ENCODE measurements at regions of chr5 and their contacts with region 1.

Region 1: GRCh38 chr5:169701910-169702451 is 64.9 kb downstream of the DOCK2 start:
- DNase-seq: peak in 2 of 4 experiments; percentile 25 to 40
- ATAC-seq: peak; percentile 76
- H3K4me3 ChIP-seq: no peak overlapping the region
- H3K27ac ChIP-seq: no peak overlapping the region
- H3K4me1 ChIP-seq: peaks cover 0 to 10% of the 10 kb centered on the region in 2 experiments; a peak in 2 of 5 replicates
- H3K27me3 ChIP-seq: no peaks in the 10 kb centered on the region
- CTCF ChIP-seq: peak; percentile 47 to 74 (median 57); a peak in 5 of 6 replicates
- EP300 ChIP-seq: no peak
- POLR2A ChIP-seq: no peak
- RAD21 ChIP-seq: peak; percentile 55 to 84

Region 2: DNA sequence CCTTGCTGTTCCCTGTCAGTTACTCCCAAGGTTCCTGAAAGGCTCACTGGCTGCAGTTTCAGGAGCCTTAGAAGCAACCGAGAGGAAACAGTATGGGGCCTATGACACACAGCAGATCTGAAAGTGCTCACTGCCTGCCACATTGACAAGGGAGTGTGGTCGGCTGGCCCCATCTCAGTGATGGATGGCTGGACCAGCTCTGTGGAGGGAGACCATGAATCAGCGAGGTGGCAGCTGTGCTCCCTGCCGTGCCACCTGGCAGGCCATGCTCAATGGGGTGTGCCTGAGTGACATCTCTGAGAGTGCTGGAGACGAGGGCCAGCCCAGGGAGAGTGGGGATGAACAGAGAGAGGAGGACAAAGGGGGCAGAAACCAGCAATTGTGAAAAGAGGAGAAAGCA is 15.8 kb before region 1 on chr5:
- CTCF ChIA-PET with region 1: no interaction called
- POLR2A ChIA-PET with region 1: no interaction called
- in situ Hi-C with region 1: no loop called
- intact Hi-C with region 1: no loop called
- DNase-seq: no peak
- ATAC-seq: no peak
- H3K4me3 ChIP-seq: no peak overlapping the region
- H3K27ac ChIP-seq: no peak overlapping the region
- H3K4me1 ChIP-seq: no peaks in the 10 kb centered on the region
- H3K27me3 ChIP-seq: 0 out of 5 replicates have a peak, but pooled peaks cover 0 to 4% of the 10 kb centered on the region in 2 experiments
- CTCF ChIP-seq: no peak
- EP300 ChIP-seq: no peak
- POLR2A ChIP-seq: no peak
- RAD21 ChIP-seq: no peak

Region 3: GRCh38 chr5:169745441-169746146 is 43.6 kb after region 1 on chr5:
- CTCF ChIA-PET with region 1: no interaction called
- POLR2A ChIA-PET with region 1: no interaction called
- in situ Hi-C with region 1: no loop called
- intact Hi-C with region 1: loop called (anchors 1 kb)
- DNase-seq: peak; percentile 24 to 50 (median 38)
- ATAC-seq: peak; percentile 57
- H3K4me3 ChIP-seq: no peak overlapping the region
- H3K27ac ChIP-seq: peak overlapping the region; percentile 87
- H3K4me1 ChIP-seq: peaks cover 14 to 38% of the 10 kb centered on the region in 2 experiments; a peak in 4 of 5 replicates
- H3K27me3 ChIP-seq: no peaks in the 10 kb centered on the region
- CTCF ChIP-seq: no peak
- EP300 ChIP-seq: no peak
- POLR2A ChIP-seq: no peak
- RAD21 ChIP-seq: no peak

Region 4: DNA sequence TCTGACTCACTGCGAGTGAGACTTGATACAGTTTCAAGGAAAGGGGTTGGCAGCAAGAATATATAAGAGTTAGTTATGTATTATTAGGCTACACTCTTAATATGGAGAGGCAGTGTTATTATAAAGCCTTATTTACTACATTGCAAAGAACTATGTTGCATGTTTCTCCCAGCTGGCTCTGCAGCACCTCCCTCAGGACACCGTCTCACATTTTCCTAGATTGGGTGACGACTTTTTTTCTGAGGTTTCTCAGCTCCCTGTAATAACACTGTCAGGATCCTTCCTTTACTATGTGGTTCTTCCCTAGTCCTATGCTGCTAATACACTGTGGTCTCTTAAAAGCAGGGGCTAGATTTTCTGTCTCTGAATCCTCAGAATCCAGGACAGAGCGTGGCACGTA is 124.6 kb after region 1 on chr5:
- CTCF ChIA-PET with region 1: no interaction called
- POLR2A ChIA-PET with region 1: no interaction called
- in situ Hi-C with region 1: no loop called
- intact Hi-C with region 1: loop called (anchors 1 kb)
- DNase-seq: peak; percentile 12 to 25 (median 18)
- ATAC-seq: peak; percentile 63; the same call in 1 of the 3 replicates
- H3K4me3 ChIP-seq: no peak overlapping the region
- H3K27ac ChIP-seq: no peak overlapping the region
- H3K4me1 ChIP-seq: no peaks in the 10 kb centered on the region
- H3K27me3 ChIP-seq: no peaks in the 10 kb centered on the region; a peak in 1 of 5 replicates
- CTCF ChIP-seq: peak; percentile 36 to 54 (median 39); a peak in 4 of 6 replicates
- EP300 ChIP-seq: no peak
- POLR2A ChIP-seq: no peak
- RAD21 ChIP-seq: peak in 1 of 2 experiments; percentile 48; a peak in 3 of 4 replicates

Region 5: DNA sequence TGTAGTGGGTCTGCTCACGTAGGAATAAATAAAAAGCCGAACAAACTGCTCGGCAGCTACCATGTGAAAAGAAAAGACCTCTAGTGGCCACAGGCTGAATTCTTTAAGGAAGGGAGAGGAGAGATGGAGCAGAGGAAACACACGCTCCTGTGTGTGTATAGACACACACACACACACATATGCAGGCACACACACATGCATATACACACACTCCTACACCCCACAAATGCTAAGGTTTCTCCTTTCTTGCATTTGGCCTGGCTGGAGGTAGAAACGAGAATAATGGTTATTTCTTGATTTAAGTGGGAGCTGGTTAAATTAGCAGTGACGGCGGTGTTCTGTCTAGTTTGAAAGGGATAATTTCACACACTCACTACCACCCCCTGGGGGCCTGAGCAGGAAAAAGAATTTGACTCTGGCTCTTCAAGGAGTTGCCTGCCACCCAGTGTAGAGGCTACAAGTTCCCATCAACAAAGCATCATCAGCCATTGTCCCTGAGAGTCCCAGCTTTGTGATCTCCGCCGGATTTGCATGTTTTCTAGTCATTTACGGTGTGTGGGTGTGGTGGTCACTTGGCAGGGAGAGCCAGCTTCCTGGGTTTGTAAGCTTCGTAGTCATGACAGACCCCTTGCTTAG is 278.6 kb after region 1 on chr5 and contains the start of gene INSYN2B:
- CTCF ChIA-PET with region 1: interaction called, 5 read pairs
- POLR2A ChIA-PET with region 1: interaction called, 6 read pairs
- in situ Hi-C with region 1: loop called (anchors 10 kb)
- intact Hi-C with region 1: loop called (anchors 1 kb)
- DNase-seq: peak; percentile 65 to 71 (median 68)
- ATAC-seq: peak; percentile 97
- H3K4me3 ChIP-seq: no peak within 1 kb of the TSS
- H3K27ac ChIP-seq: no peak within 1 kb of the TSS
- H3K4me1 ChIP-seq: no peaks in the 10 kb centered on the region; a peak in 1 of 5 replicates
- H3K27me3 ChIP-seq: no peaks in the 10 kb centered on the region; a peak in 1 of 5 replicates
- CTCF ChIP-seq: peak; percentile 67 to 98 (median 84)
- EP300 ChIP-seq: no peak
- POLR2A ChIP-seq: no peak
- RAD21 ChIP-seq: peak; percentile 42 to 75
- polyA plus RNA-seq, gene INSYN2B: not detected

Region 6: DNA sequence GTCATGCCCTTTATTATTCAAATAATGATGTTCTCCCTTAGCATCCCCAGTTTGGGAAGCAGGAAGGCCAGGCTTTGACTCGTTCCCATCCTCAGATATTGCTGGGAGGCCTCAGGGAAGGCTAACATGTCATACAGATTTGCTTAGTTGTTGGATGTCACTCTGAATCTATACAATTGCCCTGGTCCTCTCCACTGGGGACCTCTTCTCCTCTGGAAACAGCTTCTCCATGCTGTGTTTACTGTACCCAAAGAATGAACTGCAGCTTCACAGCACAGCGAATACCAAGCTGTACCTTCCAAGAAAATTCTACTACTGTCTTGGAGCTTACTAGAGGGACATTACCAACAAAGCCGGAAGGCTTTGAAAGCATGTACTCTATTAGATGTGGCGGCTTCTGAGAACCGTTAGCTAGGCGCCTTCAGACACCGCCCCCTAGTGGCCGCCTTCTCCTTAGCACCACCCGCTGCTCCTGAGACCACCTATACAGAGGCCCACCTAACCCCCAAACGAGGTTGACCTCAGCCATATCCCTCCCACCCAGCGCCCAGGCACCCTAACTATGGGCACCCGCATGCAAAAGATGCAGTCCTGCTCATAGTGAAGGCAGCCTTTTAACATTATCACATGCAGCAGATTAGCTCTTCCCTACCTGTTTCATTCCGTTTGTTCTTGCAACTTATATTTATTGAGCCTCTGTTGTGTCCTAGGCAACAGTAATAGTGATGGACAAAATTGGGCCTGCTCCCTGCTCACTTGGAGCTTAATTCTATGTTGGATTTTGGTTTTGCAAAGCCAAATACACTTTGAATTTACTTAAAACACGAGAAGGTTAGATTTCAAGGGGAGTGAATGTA is 368.8 kb after region 1 on chr5:
- CTCF ChIA-PET with region 1: interaction called, 4 read pairs
- POLR2A ChIA-PET with region 1: no interaction called
- in situ Hi-C with region 1: no loop called
- intact Hi-C with region 1: loop called (anchors 1 kb)
- DNase-seq: peak; percentile 65 to 80 (median 72)
- ATAC-seq: peak; percentile 98
- H3K4me3 ChIP-seq: no peak overlapping the region
- H3K27ac ChIP-seq: no peak overlapping the region
- H3K4me1 ChIP-seq: no peaks in the 10 kb centered on the region
- H3K27me3 ChIP-seq: no peaks in the 10 kb centered on the region
- CTCF ChIP-seq: peak; percentile 71 to 90 (median 71)
- EP300 ChIP-seq: no peak
- POLR2A ChIP-seq: no peak
- RAD21 ChIP-seq: peak in 1 of 2 experiments; percentile 66; a peak in 3 of 4 replicates

Region 7: DNA sequence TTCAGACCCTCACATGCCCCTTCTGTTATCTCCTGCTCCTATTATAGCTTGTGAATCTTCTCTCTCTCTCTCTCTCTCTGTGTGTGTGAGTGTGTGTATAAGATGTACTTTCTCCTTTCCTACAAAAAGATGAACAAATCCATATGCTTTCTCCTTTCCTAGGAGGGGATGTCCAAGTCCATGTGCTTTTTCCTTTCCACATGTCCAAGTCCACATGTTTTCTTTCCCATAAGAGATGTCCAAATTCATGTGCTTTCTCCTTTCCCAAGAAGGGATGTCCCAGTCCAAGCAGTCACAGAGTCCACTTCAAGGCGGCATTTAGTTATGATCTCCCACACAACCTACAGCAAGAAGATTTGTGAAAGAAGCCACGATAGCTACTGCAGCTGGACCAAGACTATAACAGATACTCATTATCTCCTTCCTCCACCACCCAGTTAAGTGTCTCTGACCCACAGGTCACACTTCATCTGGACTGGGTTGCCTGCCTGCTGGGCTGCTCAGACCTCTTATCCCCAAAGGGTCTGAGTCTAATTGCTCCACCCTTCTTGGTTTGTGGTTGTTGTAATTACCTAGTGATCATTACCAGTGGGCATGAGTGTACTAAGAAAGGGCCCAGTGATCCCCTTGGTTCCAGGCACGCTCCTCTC is 385.3 kb after region 1 on chr5:
- CTCF ChIA-PET with region 1: no interaction called
- POLR2A ChIA-PET with region 1: no interaction called
- in situ Hi-C with region 1: no loop called
- intact Hi-C with region 1: no loop called
- DNase-seq: peak in 3 of 4 experiments; percentile 18 to 50 (median 39)
- ATAC-seq: peak; percentile 52; the same call in 2 of the 3 replicates
- H3K4me3 ChIP-seq: no peak overlapping the region
- H3K27ac ChIP-seq: no peak overlapping the region
- H3K4me1 ChIP-seq: no peaks in the 10 kb centered on the region; a peak in 1 of 5 replicates
- H3K27me3 ChIP-seq: peaks cover 0 to 7% of the 10 kb centered on the region in 2 experiments; a peak in 1 of 5 replicates
- CTCF ChIP-seq: no peak
- EP300 ChIP-seq: no peak
- POLR2A ChIP-seq: no peak
- RAD21 ChIP-seq: no peak

Region 8: GRCh38 chr5:170105642-170106611 is 403.9 kb after region 1 on chr5 and contains the start of gene FOXI1:
- CTCF ChIA-PET with region 1: no interaction called
- POLR2A ChIA-PET with region 1: no interaction called
- in situ Hi-C with region 1: no loop called
- intact Hi-C with region 1: no loop called
- DNase-seq: peak in 1 of 4 experiments; percentile 17
- ATAC-seq: peak; percentile 49; the same call in 2 of the 3 replicates
- H3K4me3 ChIP-seq: no peak within 1 kb of the TSS
- H3K27ac ChIP-seq: no peak within 1 kb of the TSS
- H3K4me1 ChIP-seq: peaks cover 0 to 3% of the 10 kb centered on the region in 2 experiments; a peak in 1 of 5 replicates
- H3K27me3 ChIP-seq: peaks cover 0 to 50% of the 10 kb centered on the region in 2 experiments; a peak in 3 of 5 replicates
- CTCF ChIP-seq: no peak
- EP300 ChIP-seq: no peak
- POLR2A ChIP-seq: no peak
- RAD21 ChIP-seq: no peak
- polyA plus RNA-seq, gene FOXI1: not detected

Region 9: GRCh38 chr5:170183816-170184687 is 482.1 kb after region 1 on chr5:
- CTCF ChIA-PET with region 1: no interaction called
- POLR2A ChIA-PET with region 1: no interaction called
- in situ Hi-C with region 1: loop called (anchors 10 kb)
- intact Hi-C with region 1: loop called (anchors 5 kb)
- DNase-seq: peak; percentile 54 to 74 (median 69)
- ATAC-seq: peak; percentile 98
- H3K4me3 ChIP-seq: no peak overlapping the region
- H3K27ac ChIP-seq: no peak overlapping the region
- H3K4me1 ChIP-seq: no peaks in the 10 kb centered on the region
- H3K27me3 ChIP-seq: peaks cover 9 to 44% of the 10 kb centered on the region in 2 experiments; a peak in 4 of 5 replicates
- CTCF ChIP-seq: peak; percentile 81 to 91 (median 89)
- EP300 ChIP-seq: no peak
- POLR2A ChIP-seq: no peak
- RAD21 ChIP-seq: peak; percentile 79 to 92

Region 10: DNA sequence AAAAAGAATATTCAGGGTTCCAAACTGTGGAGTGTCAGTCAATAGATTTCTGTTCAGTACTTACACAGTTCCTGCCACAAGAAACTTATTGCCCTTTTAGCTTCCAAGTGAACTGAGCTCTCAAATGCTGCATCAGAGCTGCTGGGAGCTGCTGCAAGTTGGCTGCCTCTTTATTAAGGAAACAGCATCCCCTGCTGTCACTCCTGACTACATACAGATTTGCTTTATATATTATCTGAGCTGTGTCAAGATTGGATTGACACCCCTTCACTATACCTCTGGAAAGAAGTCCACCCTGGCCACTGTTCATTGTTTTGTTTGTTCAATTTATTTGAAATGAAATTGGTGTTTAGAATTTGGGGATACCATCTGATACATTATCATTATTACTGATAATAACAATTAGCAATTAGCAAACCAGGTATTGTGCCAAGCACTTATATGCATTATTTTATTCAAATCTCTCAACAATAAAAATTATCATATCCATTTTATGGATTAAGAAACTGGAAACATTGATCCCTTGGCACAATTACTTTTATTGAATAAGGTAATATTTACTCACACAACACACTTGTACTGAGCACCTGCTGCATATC is 514.4 kb after region 1 on chr5:
- CTCF ChIA-PET with region 1: no interaction called
- POLR2A ChIA-PET with region 1: no interaction called
- in situ Hi-C with region 1: no loop called
- intact Hi-C with region 1: no loop called
- DNase-seq: peak; percentile 17 to 53 (median 38)
- ATAC-seq: peak; percentile 78
- H3K4me3 ChIP-seq: no peak overlapping the region
- H3K27ac ChIP-seq: no peak overlapping the region
- H3K4me1 ChIP-seq: no peaks in the 10 kb centered on the region
- H3K27me3 ChIP-seq: peaks cover 0 to 5% of the 10 kb centered on the region in 2 experiments; a peak in 2 of 5 replicates
- CTCF ChIP-seq: peak; percentile 68 to 91 (median 69)
- EP300 ChIP-seq: no peak
- POLR2A ChIP-seq: no peak
- RAD21 ChIP-seq: peak; percentile 96 to 97

Measured in K562 (cell line).